Endothelial cell of umbilical vein (primary cell): ENCODE measurements at regions of chrX and their contacts with region 1.

Region 1: DNA sequence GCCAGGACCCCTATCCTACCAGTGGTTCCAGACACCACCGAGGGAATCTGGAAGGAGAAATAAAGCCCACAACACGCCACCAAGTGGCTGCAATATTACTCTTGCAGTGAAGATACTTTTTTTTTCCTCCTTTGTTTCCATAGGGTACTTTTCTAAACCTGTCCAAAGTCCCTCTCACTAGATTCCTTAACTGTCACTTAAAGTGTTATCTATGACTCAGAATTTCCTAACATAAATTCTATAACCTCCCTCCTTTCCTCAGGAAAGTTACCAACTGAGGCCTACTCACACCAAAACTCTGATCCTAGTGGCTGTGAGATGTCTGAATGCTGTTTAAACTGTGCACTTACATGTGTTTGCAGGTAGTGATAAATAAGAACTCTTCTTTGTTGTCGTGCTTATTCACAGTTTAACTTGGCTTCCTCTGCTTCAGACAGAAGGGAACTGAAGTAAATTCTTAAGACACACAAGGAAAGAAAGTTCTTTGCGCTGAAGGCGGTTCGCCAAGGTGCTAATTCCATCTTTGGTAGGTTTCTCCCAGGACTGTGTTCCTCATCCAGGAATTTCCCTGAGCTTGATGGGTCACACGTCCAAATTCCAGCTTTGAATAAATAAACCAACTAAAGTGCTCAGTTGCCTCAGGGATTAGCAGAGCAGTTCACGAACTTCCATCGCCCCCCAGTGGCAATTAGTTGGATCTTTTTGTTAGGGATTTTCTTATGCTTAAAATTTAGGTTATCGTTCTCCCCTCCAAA is 10.7 kb upstream of the HCCS start:
- DNase-seq: peak; percentile 63
- H3K4me3 ChIP-seq: no peak overlapping the region
- H3K27ac ChIP-seq: peak overlapping the region; percentile 40
- H3K4me1 ChIP-seq: peaks cover 4% of the 10 kb centered on the region
- H3K27me3 ChIP-seq: no peaks in the 10 kb centered on the region
- CTCF ChIP-seq: peak; percentile 28 to 45
- POLR2A ChIP-seq: no peak

Region 2: GRCh38 chrX:10444205-10444604 is 656.3 kb before region 1 on chrX:
- CTCF ChIA-PET with region 1: interaction called, 3 read pairs
- POLR2A ChIA-PET with region 1: no interaction called
- dilution Hi-C with region 1: no loop called
- intact Hi-C with region 1: loop called (anchors 5 kb)
- DNase-seq: peak; percentile 4
- H3K4me3 ChIP-seq: no peak overlapping the region
- H3K27ac ChIP-seq: no peak overlapping the region
- H3K4me1 ChIP-seq: peaks cover 2% of the 10 kb centered on the region
- H3K27me3 ChIP-seq: no peaks in the 10 kb centered on the region
- CTCF ChIP-seq: peak; percentile 11 to 17
- POLR2A ChIP-seq: no peak

Region 3: GRCh38 chrX:10685923-10686590 is 414.4 kb before region 1 on chrX:
- CTCF ChIA-PET with region 1: no interaction called
- POLR2A ChIA-PET with region 1: no interaction called
- dilution Hi-C with region 1: no loop called
- intact Hi-C with region 1: no loop called
- DNase-seq: no peak
- H3K4me3 ChIP-seq: no peak overlapping the region
- H3K27ac ChIP-seq: no peak overlapping the region
- H3K4me1 ChIP-seq: no peaks in the 10 kb centered on the region
- H3K27me3 ChIP-seq: no peaks in the 10 kb centered on the region
- CTCF ChIP-seq: no peak
- POLR2A ChIP-seq: no peak

Region 4: DNA sequence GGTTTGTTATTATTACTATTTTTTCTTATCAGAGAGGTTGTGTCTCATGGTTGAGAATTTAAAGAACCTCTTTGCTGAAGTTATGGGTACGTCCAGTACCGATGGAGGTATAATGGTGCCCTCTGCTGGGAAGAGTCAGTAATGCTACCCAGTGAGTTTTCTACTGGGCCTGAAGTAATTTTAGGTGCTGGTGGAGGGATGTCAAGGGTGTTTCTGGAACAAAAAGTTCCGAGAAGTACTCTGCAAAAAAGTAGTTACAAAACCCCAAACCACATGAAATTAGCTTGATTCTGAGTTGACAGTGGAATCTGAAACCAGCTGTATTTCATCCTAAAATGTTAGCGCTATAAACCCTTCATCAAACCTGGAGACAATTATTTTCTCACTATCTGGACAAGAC is 377.6 kb before region 1 on chrX:
- CTCF ChIA-PET with region 1: interaction called, 32 read pairs
- POLR2A ChIA-PET with region 1: no interaction called
- dilution Hi-C with region 1: no loop called
- intact Hi-C with region 1: loop called (anchors 1 kb)
- DNase-seq: peak; percentile 54
- H3K4me3 ChIP-seq: no peak overlapping the region
- H3K27ac ChIP-seq: no peak overlapping the region
- H3K4me1 ChIP-seq: peaks cover 2% of the 10 kb centered on the region
- H3K27me3 ChIP-seq: no peaks in the 10 kb centered on the region
- CTCF ChIP-seq: peak; percentile 49 to 55
- POLR2A ChIP-seq: no peak

Region 5: DNA sequence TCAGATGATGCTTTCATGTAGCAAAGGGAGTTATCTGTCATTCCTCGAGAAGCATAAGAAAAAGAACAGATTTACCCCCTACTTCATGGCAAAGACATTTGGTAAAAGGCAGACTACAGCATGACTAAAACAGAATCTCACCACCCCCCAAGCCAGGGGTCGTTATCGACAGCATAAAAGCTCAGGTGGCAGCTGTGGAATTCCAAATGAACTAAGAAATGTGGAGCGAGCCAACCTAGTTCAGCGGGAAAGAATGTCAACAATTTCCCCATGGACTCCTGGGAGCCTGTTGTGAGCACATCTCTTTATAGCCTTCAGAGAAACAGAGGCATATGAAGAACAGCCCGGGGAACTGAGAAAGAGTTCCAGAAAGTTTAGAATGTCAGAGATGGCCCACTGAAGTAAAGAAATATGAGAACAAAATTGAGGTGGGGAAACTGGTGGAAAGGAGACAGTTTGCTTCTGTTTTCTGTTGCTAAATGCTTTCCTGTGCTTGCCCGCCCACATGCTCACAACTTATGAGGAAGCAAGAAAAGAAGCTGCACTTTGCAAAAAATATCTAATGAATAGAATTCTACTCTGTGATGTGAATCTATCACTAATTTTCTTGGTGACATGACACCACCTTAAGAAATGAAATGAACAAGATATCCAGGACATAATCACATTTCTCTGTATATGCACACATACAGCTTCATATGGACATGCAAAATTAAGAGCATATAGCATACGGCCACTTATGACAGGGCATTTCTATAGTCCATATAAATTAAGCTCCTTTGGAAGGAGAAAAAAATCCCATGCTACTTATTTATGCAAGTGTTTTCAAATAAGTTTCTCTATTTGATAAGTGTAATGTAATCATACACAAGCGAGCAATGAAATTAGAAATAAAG is 344.8 kb before region 1 on chrX:
- CTCF ChIA-PET with region 1: interaction called, 10 read pairs
- POLR2A ChIA-PET with region 1: no interaction called
- dilution Hi-C with region 1: no loop called
- intact Hi-C with region 1: no loop called
- DNase-seq: peak; percentile 58
- H3K4me3 ChIP-seq: no peak overlapping the region
- H3K27ac ChIP-seq: peak overlapping the region; percentile 44
- H3K4me1 ChIP-seq: peaks cover 9% of the 10 kb centered on the region
- H3K27me3 ChIP-seq: no peaks in the 10 kb centered on the region
- CTCF ChIP-seq: no peak
- POLR2A ChIP-seq: no peak

Region 6: GRCh38 chrX:10769195-10769594 is 331.3 kb before region 1 on chrX:
- CTCF ChIA-PET with region 1: interaction called, 5 read pairs
- POLR2A ChIA-PET with region 1: no interaction called
- dilution Hi-C with region 1: no loop called
- intact Hi-C with region 1: loop called (anchors 5 kb)
- DNase-seq: peak; percentile 36
- H3K4me3 ChIP-seq: no peak overlapping the region
- H3K27ac ChIP-seq: no peak overlapping the region
- H3K4me1 ChIP-seq: peaks cover 4% of the 10 kb centered on the region
- H3K27me3 ChIP-seq: no peaks in the 10 kb centered on the region
- CTCF ChIP-seq: peak; percentile 24 to 48
- POLR2A ChIP-seq: no peak

Region 7: DNA sequence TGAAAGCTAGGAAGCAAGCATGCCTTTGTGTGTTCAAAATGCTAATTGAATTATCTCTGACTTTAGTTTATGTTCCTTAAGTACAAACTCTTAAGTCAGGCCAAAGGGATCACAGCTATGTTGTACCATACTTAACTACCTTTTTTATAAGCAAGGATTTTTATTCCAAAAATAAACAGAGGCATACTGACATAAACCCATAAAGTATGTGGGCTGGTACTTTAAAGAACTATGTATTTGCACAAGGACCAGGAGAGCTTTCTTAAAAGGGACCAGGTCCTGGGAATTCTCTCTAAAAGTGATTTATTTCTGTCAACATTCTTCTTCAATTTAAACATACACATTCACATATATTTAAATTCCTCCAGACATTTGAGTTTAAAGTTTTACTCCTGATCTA is 47.1 kb before region 1 on chrX:
- CTCF ChIA-PET with region 1: no interaction called
- POLR2A ChIA-PET with region 1: no interaction called
- dilution Hi-C with region 1: no loop called
- intact Hi-C with region 1: no loop called
- DNase-seq: no peak
- H3K4me3 ChIP-seq: no peak overlapping the region
- H3K27ac ChIP-seq: no peak overlapping the region
- H3K4me1 ChIP-seq: no peaks in the 10 kb centered on the region
- H3K27me3 ChIP-seq: no peaks in the 10 kb centered on the region
- CTCF ChIP-seq: no peak
- POLR2A ChIP-seq: no peak